Endothelial cell of umbilical vein (primary cell): ENCODE measurements at regions of chr14 and their contacts with region 1.

Region 1: GRCh38 chr14:56339855-56340701 is 221.9 kb downstream of the PELI2 start:
- DNase-seq: peak; percentile 89
- H3K4me3 ChIP-seq: no peak overlapping the region
- H3K27ac ChIP-seq: peak overlapping the region; percentile 55
- H3K4me1 ChIP-seq: peaks cover 43% of the 10 kb centered on the region
- H3K27me3 ChIP-seq: no peaks in the 10 kb centered on the region
- CTCF ChIP-seq: peak; percentile 86 to 94
- POLR2A ChIP-seq: no peak

Region 2: DNA sequence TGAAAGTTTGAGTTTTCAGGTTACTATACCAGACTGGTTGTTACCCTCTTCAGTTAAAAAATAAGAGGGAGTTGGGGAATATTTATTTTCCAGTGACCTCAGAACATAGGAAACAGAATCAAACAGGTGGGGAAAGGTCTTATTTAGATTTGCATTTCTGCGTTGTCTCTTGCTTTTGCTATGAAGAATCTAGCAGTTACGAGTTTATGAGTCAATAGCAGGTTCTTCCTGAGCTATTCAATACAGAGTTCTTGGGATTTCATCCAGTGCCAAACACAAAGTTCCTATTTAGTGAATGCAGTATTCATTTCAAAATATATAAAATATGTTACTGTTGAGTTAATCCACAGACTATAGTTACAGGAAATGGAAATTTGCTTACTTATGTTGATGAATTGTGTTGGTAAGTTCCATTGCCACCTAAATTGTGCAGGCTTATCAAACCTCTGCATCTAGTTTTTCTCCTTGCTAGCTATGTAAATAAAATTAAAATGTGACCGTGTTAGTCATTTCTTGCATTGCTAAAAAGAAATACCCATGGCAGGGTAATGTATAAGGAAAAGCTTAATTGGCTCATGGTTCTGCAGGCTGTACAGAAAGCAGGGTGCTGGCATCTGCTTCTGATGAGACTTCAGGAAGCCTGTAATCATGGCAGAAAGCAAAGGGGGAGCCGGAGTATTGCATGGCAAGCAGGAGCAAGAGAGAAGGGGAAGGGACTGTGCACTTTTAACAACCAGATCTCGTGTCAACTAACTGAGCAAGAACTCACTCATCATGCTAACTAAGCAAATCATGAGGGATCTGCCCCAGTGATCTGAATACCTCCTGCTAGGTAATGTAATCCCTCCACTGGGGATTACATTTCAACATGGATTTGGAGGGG is 649.9 kb before region 1 on chr14:
- CTCF ChIA-PET with region 1: interaction called, 10 read pairs
- POLR2A ChIA-PET with region 1: no interaction called
- dilution Hi-C with region 1: no loop called
- intact Hi-C with region 1: no loop called
- DNase-seq: peak; percentile 73
- H3K4me3 ChIP-seq: peak overlapping the region in 2 of 3 experiments; percentile 11 to 47
- H3K27ac ChIP-seq: peak overlapping the region; percentile 80
- H3K4me1 ChIP-seq: peaks cover 20% of the 10 kb centered on the region
- H3K27me3 ChIP-seq: no peaks in the 10 kb centered on the region
- CTCF ChIP-seq: no peak
- POLR2A ChIP-seq: no peak

Region 3: GRCh38 chr14:55807059-55807499 is 533.0 kb before region 1 on chr14:
- CTCF ChIA-PET with region 1: interaction called, 6 read pairs
- POLR2A ChIA-PET with region 1: no interaction called
- dilution Hi-C with region 1: no loop called
- intact Hi-C with region 1: loop called (anchors 2 kb)
- DNase-seq: peak; percentile 98
- H3K4me3 ChIP-seq: no peak overlapping the region
- H3K27ac ChIP-seq: peak overlapping the region; percentile 82
- H3K4me1 ChIP-seq: peaks cover 33% of the 10 kb centered on the region
- H3K27me3 ChIP-seq: no peaks in the 10 kb centered on the region
- CTCF ChIP-seq: no peak
- POLR2A ChIP-seq: no peak

Region 4: DNA sequence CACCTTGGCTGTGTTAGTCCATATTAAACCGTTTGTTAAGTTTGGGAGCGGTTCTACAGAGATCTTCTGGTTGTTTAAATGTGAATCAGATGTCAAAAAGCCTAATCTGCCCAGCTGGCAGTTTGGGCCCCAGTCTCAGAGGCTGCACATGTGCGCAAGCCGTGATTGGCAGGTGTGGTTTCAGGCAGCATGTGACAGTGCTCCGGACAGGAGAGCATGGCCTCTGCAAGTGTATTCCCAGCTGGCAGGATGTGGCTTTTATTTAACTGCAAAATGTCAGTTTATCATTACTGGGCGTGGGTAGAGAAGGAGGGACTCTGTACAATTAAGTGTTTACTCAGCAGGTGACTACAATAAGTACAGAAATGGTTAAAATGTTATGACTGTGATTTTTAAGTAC is 144.4 kb before region 1 on chr14:
- CTCF ChIA-PET with region 1: interaction called, 3 read pairs
- POLR2A ChIA-PET with region 1: no interaction called
- dilution Hi-C with region 1: no loop called
- intact Hi-C with region 1: loop called (anchors 1 kb)
- DNase-seq: peak; percentile 31
- H3K4me3 ChIP-seq: no peak overlapping the region
- H3K27ac ChIP-seq: no peak overlapping the region
- H3K4me1 ChIP-seq: peaks cover 19% of the 10 kb centered on the region
- H3K27me3 ChIP-seq: no peaks in the 10 kb centered on the region
- CTCF ChIP-seq: no peak
- POLR2A ChIP-seq: no peak

Region 5: DNA sequence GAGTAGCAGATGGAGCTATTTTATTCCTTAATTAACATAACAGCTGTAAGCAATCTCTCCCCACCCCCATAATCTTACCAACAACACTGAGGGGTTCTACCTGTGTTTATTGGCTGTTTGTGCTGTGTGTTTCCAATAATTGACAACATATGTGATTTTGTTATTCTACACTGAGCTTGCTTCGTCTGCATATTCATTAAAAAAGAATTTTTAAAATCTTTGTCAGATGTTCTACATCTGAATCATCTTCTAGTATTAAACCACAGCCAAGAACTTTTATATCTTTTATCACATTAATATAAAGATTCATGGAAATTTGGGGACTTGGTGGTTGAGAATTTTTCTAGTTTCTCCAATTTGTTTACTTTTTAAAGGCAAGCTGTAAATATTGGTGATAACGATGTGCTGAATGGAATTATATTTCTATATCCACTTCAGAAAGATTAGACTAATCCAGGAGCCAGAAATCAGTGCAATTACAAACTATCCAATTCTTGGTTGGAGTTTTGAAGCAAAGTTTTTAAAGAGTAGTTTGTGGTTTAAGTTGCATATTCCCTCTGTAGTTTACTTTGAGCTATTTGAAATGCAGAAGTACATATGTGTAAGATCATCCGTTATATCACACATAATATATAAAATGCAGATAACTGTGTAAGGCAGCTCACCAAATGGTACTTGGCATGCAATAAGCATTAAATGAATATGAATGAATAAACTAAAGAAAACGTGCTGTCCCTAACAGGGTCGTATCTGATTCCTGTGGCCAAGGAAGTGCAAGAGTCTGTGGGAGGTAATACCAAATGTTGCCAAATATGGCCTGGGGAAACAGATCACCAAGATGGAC is 15.0 kb before region 1 on chr14:
- CTCF ChIA-PET with region 1: interaction called, 18 read pairs
- POLR2A ChIA-PET with region 1: no interaction called
- dilution Hi-C with region 1: no loop called
- intact Hi-C with region 1: no loop called
- DNase-seq: no peak
- H3K4me3 ChIP-seq: no peak overlapping the region
- H3K27ac ChIP-seq: no peak overlapping the region
- H3K4me1 ChIP-seq: no peaks in the 10 kb centered on the region
- H3K27me3 ChIP-seq: peaks cover 0 to 1% of the 10 kb centered on the region in 2 experiments
- CTCF ChIP-seq: no peak
- POLR2A ChIP-seq: no peak

Region 6: GRCh38 chr14:56422703-56423213 is 82.7 kb after region 1 on chr14:
- CTCF ChIA-PET with region 1: interaction called, 60 read pairs
- POLR2A ChIA-PET with region 1: no interaction called
- dilution Hi-C with region 1: no loop called
- intact Hi-C with region 1: loop called (anchors 1 kb)
- DNase-seq: peak; percentile 84
- H3K4me3 ChIP-seq: no peak overlapping the region
- H3K27ac ChIP-seq: no peak overlapping the region
- H3K4me1 ChIP-seq: no peaks in the 10 kb centered on the region
- H3K27me3 ChIP-seq: no peaks in the 10 kb centered on the region
- CTCF ChIP-seq: peak; percentile 59 to 71
- POLR2A ChIP-seq: no peak

Region 7: GRCh38 chr14:56501909-56502530 is 161.9 kb after region 1 on chr14:
- CTCF ChIA-PET with region 1: no interaction called
- POLR2A ChIA-PET with region 1: no interaction called
- dilution Hi-C with region 1: no loop called
- intact Hi-C with region 1: no loop called
- DNase-seq: no peak
- H3K4me3 ChIP-seq: no peak overlapping the region
- H3K27ac ChIP-seq: no peak overlapping the region
- H3K4me1 ChIP-seq: no peaks in the 10 kb centered on the region
- H3K27me3 ChIP-seq: peaks cover 11 to 25% of the 10 kb centered on the region in 2 experiments
- CTCF ChIP-seq: no peak
- POLR2A ChIP-seq: no peak